Gastrocnemius medialis (tissue), 4 donors: ENCODE measurements at regions of chr5 and their contacts with region 1.

Region 1: GRCh38 chr5:114449860-114450421 is 88.1 kb downstream of the KCNN2 start:
- DNase-seq: peak; percentile 11 to 40
- ATAC-seq: peak; percentile 70 to 80
- H3K4me3 ChIP-seq: no peak overlapping the region
- H3K27ac ChIP-seq: no peak overlapping the region
- H3K4me1 ChIP-seq: peaks cover 0 to 6% of the 10 kb centered on the region in 2 donors
- H3K27me3 ChIP-seq: no peaks in the 10 kb centered on the region
- CTCF ChIP-seq: peak; percentile 41 to 79 (median 75)
- POLR2A ChIP-seq: no peak

Region 2: GRCh38 chr5:113612060-113612496 is 837.9 kb before region 1 on chr5:
- in situ Hi-C with region 1: loop called in 2 of 4 experiments (anchors 10 kb)
- intact Hi-C with region 1: loop called (anchors 1 kb)
- DNase-seq: no peak
- ATAC-seq: peak; percentile 42 to 56
- H3K4me3 ChIP-seq: no peak overlapping the region
- H3K27ac ChIP-seq: no peak overlapping the region
- H3K4me1 ChIP-seq: no peaks in the 10 kb centered on the region
- H3K27me3 ChIP-seq: no peaks in the 10 kb centered on the region
- CTCF ChIP-seq: peak; percentile 15 to 68 (median 54)
- POLR2A ChIP-seq: no peak

Region 3: DNA sequence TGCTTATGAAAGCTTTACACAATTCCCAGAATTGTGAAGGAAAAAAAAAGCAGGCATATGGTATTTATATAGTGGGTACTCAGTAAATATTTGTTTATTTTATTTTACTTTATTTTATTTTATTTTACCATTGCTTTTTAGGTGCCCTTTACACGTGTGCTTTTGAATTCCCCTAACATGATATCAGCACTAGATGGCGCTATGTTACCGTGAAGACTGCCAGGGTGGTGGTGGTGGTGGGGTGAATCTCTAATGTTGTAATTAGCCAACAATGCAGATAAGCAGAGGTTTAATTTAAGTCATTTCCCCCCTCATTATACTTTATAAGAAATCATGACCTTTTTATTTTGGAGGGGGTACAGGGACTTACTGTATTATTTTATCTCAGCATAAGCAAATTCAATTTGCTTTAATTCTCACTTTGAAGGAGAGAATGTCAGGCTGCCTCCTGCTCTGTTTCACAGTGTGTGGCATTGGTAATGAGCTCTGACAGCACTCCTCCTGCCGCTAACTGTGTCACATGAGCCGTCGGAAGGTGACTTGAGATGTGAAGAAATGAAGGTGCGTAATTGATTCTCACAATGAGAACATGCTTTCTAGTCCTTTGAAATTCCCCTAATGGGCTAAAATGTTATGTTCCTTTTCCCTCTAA is 770.9 kb before region 1 on chr5:
- in situ Hi-C with region 1: loop called in 2 of 4 experiments (anchors 25 kb)
- intact Hi-C with region 1: loop called (anchors 2 kb)
- DNase-seq: no peak
- ATAC-seq: peak; percentile 45 to 60
- H3K4me3 ChIP-seq: no peak overlapping the region
- H3K27ac ChIP-seq: no peak overlapping the region
- H3K4me1 ChIP-seq: no peaks in the 10 kb centered on the region
- H3K27me3 ChIP-seq: no peaks in the 10 kb centered on the region
- CTCF ChIP-seq: peak; percentile 37 to 68 (median 53)
- POLR2A ChIP-seq: no peak

Region 4: GRCh38 chr5:113692891-113693457 is 757.0 kb before region 1 on chr5:
- in situ Hi-C with region 1: loop called in 3 of 4 experiments (anchors 10 to 25 kb)
- intact Hi-C with region 1: no loop called
- DNase-seq: no peak
- ATAC-seq: no peak
- H3K4me3 ChIP-seq: no peak overlapping the region
- H3K27ac ChIP-seq: no peak overlapping the region
- H3K4me1 ChIP-seq: no peaks in the 10 kb centered on the region
- H3K27me3 ChIP-seq: peaks cover 0 to 9% (median 6%) of the 10 kb centered on the region in 3 donors
- CTCF ChIP-seq: no peak
- POLR2A ChIP-seq: no peak

Region 5: GRCh38 chr5:114018186-114018585 is 431.8 kb before region 1 on chr5:
- in situ Hi-C with region 1: loop called in 1 of 4 experiments (anchors 10 kb)
- intact Hi-C with region 1: loop called (anchors 1 kb)
- DNase-seq: no peak
- ATAC-seq: no peak
- H3K4me3 ChIP-seq: no peak overlapping the region
- H3K27ac ChIP-seq: no peak overlapping the region
- H3K4me1 ChIP-seq: no peaks in the 10 kb centered on the region
- H3K27me3 ChIP-seq: peaks cover 0 to 2% (median 0%) of the 10 kb centered on the region in 3 donors
- CTCF ChIP-seq: peak in 2 of 5 experiments; percentile 35 to 51
- POLR2A ChIP-seq: no peak

Region 6: GRCh38 chr5:114101153-114101552 is 348.8 kb before region 1 on chr5:
- in situ Hi-C with region 1: loop called in 1 of 4 experiments (anchors 10 kb)
- intact Hi-C with region 1: no loop called
- DNase-seq: no peak
- ATAC-seq: no peak
- H3K4me3 ChIP-seq: no peak overlapping the region
- H3K27ac ChIP-seq: no peak overlapping the region
- H3K4me1 ChIP-seq: no peaks in the 10 kb centered on the region
- H3K27me3 ChIP-seq: no peaks in the 10 kb centered on the region
- CTCF ChIP-seq: peak in 2 of 5 experiments; percentile 38 to 58
- POLR2A ChIP-seq: no peak